ENCODE measurements at regions of chr7 and their contacts with region 1.

Region 1: GRCh38 chr7:22726345-22727185 is 435 bp upstream of the IL6 start:
- DNase-seq: peak; percentile 81
- H3K4me3 Mint-ChIP-seq: peak overlapping the region; percentile 73
- H3K27ac Mint-ChIP-seq: peak overlapping the region; percentile 86
- H3K4me1 Mint-ChIP-seq: peaks cover 63% of the 10 kb centered on the region
- H3K27me3 Mint-ChIP-seq: no peaks in the 10 kb centered on the region
- CTCF ChIP-seq: peak; percentile 80

Region 2: DNA sequence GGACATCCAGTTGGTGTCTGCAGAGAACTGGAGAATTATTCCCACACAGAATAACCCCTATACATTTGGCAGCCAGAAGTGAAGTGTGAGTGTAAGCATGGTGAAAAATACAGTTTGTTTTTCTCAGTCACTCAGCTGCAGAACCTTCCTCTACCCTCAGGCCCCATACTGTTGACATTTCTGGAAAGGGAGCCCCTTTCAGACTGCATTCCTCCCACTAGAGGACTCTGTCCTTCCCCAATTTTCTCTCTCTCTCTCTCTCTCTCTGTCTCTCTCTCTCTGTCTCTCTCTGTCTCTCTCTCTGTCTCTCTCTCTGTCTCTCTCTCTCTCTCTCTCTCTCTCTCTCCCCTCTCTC is 139.8 kb before region 1 on chr7:
- CTCF ChIA-PET with region 1: interaction called, 60 read pairs
- intact Hi-C with region 1: loop called (anchors 1 kb)
- DNase-seq: peak; percentile 75
- H3K4me3 Mint-ChIP-seq: peak overlapping the region; percentile 44
- H3K27ac Mint-ChIP-seq: peak overlapping the region; percentile 93
- H3K4me1 Mint-ChIP-seq: peaks cover 78% of the 10 kb centered on the region
- H3K27me3 Mint-ChIP-seq: no peaks in the 10 kb centered on the region
- CTCF ChIP-seq: peak; percentile 31

Region 3: GRCh38 chr7:22657479-22657878 is 69.1 kb before region 1 on chr7:
- CTCF ChIA-PET with region 1: no interaction called
- intact Hi-C with region 1: loop called (anchors 2 kb)
- DNase-seq: no peak
- H3K4me3 Mint-ChIP-seq: no peak overlapping the region
- H3K27ac Mint-ChIP-seq: no peak overlapping the region
- H3K4me1 Mint-ChIP-seq: peaks cover 24% of the 10 kb centered on the region
- H3K27me3 Mint-ChIP-seq: no peaks in the 10 kb centered on the region
- CTCF ChIP-seq: no peak

Region 4: DNA sequence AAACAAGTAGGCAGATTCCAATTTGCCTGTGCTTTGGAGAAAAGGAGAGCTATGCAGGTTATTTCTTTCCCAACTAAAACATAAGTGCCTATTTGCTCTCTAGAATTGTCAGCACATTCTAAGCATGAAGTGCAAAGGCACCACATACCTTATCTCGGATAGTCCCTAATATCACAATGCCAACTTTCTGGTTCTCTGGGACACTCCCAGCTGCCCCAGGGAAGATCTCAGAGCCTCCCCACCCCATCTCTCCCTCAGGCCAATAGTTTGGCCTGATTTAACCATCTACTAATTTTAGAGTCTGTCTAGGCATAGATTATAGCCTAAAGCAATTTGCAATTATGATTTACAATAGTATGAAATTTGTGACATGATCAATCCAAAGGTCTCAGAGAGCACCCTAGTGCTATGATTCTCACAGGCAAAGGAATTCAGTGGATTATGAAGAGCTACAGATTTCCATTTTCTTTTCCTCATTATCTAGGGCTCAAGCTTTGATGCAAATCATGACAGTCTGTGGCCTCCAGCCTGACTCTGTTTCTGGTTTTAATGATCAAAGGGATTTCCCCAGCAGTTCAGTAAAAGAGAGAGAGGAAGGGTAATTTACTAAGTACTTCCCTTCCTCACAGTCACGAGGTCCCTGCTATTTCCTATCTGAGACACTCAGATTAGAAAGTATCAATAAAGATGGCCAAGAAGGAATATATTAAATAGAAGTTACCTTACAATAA is 28.5 kb before region 1 on chr7:
- CTCF ChIA-PET with region 1: interaction called, 13 read pairs
- intact Hi-C with region 1: no loop called
- DNase-seq: no peak
- H3K4me3 Mint-ChIP-seq: no peak overlapping the region
- H3K27ac Mint-ChIP-seq: no peak overlapping the region
- H3K4me1 Mint-ChIP-seq: peaks cover 32% of the 10 kb centered on the region
- H3K27me3 Mint-ChIP-seq: no peaks in the 10 kb centered on the region
- CTCF ChIP-seq: no peak

Measured in Calu3 (cell line).